ENCODE measurements at regions of chr9 and their contacts with region 1.

Region 1: GRCh38 chr9:130243015-130243734 is 22.4 kb upstream of the HMCN2 start:
- DNase-seq: peak; percentile 50 to 81 (median 60)
- ATAC-seq: peak; percentile 63 to 72 (median 70)
- H3K4me3 ChIP-seq: peak overlapping the region in 2 of 12 donors; percentile 18 to 35
- H3K27ac ChIP-seq: no peak overlapping the region
- H3K4me1 ChIP-seq: peaks cover 0 to 9% (median 3%) of the 10 kb centered on the region in 12 donors
- H3K27me3 ChIP-seq: no peaks in the 10 kb centered on the region
- CTCF ChIP-seq: peak; percentile 83 to 97 (median 92)
- POLR2A ChIP-seq: no peak

Region 2: DNA sequence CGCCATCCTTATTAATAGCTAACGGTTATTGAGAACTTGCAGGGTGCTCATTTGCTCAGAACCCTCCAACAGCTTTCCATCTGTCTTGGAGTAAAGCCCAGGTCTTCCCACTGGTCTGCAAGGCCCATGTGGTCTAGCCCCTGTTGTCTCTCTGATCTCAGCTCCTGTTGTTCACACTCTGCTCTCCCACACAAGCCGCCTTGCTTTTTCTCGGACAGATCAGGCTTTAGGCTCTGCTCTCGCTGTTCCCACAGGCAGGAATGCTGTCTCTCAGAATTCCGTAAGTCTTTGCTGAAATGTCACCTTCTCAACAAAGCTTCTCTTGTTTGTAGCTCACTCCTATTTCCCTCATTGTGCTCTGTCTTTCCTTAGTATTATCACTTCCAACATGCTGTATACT is 155.1 kb before region 1 on chr9:
- intact Hi-C with region 1: no loop called
- DNase-seq: no peak
- ATAC-seq: no peak
- H3K4me3 ChIP-seq: no peak overlapping the region
- H3K27ac ChIP-seq: no peak overlapping the region
- H3K4me1 ChIP-seq: no peaks in the 10 kb centered on the region
- H3K27me3 ChIP-seq: no peaks in the 10 kb centered on the region
- CTCF ChIP-seq: no peak
- POLR2A ChIP-seq: no peak

Region 3: GRCh38 chr9:130331573-130331972 is 88.4 kb after region 1 on chr9:
- intact Hi-C with region 1: loop called in 1 of 10 experiments (anchors 5 kb)
- DNase-seq: peak; percentile 64 to 86 (median 82)
- ATAC-seq: peak; percentile 54 to 80 (median 66)
- H3K4me3 ChIP-seq: no peak overlapping the region
- H3K27ac ChIP-seq: peak overlapping the region in 8 of 12 donors; percentile 30 to 87 (median 47)
- H3K4me1 ChIP-seq: peaks cover 0 to 37% (median 8%) of the 10 kb centered on the region in 12 donors
- H3K27me3 ChIP-seq: peaks cover 0 to 17% (median 4%) of the 10 kb centered on the region in 9 donors
- CTCF ChIP-seq: no peak
- POLR2A ChIP-seq: no peak